ENCODE measurements at regions of chr1 and their contacts with region 1.

Region 1: GRCh38 chr1:207251066-207251465 is 70.4 kb upstream of the CD55 start:
- DNase-seq: no peak
- ATAC-seq: no peak
- H3K4me3 ChIP-seq: no peak overlapping the region
- H3K4me3 Mint-ChIP-seq: no peak overlapping the region
- H3K27ac ChIP-seq: no peak overlapping the region
- H3K27ac Mint-ChIP-seq: no peak overlapping the region
- H3K4me1 ChIP-seq: no peaks in the 10 kb centered on the region
- H3K4me1 Mint-ChIP-seq: no peaks in the 10 kb centered on the region
- H3K27me3 ChIP-seq: no peaks in the 10 kb centered on the region
- H3K27me3 Mint-ChIP-seq: no peaks in the 10 kb centered on the region
- CTCF ChIP-seq: no peak

Region 2: DNA sequence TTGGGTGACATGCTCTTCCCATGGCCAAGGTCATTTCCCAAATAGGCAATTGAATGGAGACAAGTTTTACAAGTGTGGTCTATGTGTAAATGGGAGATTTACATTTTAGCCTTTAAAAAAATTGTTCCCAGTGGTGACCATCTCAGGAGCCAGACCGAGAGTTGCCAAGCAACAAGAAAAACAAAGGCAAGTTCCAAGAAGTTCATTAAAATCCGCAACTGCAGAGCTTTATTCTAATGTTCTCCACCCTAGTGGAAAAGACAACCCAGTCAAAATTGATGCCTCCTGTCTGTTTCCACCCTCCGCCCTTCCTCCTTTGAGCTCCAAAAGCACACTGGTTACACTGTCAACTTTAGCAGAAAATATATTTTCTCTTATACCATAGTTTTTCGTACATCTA is 37.2 kb after region 1 on chr1:
- CTCF ChIA-PET with region 1: no interaction called
- POLR2A ChIA-PET with region 1: no interaction called
- intact Hi-C with region 1: loop called in 1 of 2 experiments (anchors 5 kb)
- DNase-seq: no peak
- ATAC-seq: no peak
- H3K4me3 ChIP-seq: no peak overlapping the region
- H3K4me3 Mint-ChIP-seq: no peak overlapping the region
- H3K27ac ChIP-seq: no peak overlapping the region
- H3K27ac Mint-ChIP-seq: no peak overlapping the region
- H3K4me1 ChIP-seq: peaks cover 6% of the 10 kb centered on the region
- H3K4me1 Mint-ChIP-seq: peaks cover 28% of the 10 kb centered on the region
- H3K27me3 ChIP-seq: no peaks in the 10 kb centered on the region
- H3K27me3 Mint-ChIP-seq: no peaks in the 10 kb centered on the region
- CTCF ChIP-seq: no peak

Region 3: DNA sequence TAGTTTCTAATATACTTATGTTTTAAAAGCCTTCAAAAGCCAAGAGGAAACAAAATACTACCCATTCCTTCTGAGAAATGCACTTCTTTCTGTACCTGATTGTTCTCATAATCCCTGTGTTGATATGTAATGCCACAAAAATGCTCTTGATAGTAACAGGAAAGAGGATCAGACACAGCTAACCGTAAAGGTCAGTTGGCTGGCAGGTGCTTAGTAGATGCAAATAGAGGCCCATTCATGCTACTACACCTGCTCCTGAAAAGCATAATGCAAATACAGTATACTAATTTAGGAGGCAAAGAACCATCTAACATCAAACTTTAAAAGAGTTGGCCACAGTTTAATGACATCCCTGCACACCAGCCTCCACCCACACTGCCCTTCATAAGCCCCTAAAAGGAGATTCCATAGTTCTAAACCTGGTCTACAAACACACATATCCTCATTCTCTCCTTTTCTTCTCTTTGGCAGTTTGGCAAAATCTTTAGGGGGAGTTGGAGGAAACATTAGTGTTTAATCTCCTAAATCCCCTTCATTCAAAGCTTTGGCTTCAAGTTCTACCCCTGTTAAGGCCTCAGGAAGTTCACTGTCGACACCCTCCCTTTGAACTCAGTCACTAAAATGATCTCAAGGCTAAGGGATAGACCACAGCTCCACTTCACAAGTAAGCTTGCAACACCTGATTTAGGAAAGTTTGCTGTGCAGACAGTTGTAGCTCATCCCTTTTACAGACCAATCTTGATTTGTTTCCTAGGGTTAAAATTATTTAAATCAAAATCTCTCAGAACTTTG is 497.9 kb after region 1 on chr1:
- CTCF ChIA-PET with region 1: no interaction called
- POLR2A ChIA-PET with region 1: no interaction called
- intact Hi-C with region 1: no loop called
- DNase-seq: peak in 3 of 14 experiments; percentile 39 to 56 (median 41)
- ATAC-seq: peak; percentile 18
- H3K4me3 ChIP-seq: no peak overlapping the region
- H3K4me3 Mint-ChIP-seq: peak overlapping the region; percentile 86
- H3K27ac ChIP-seq: no peak overlapping the region
- H3K27ac Mint-ChIP-seq: peak overlapping the region; percentile 78
- H3K4me1 ChIP-seq: peaks cover 25% of the 10 kb centered on the region
- H3K4me1 Mint-ChIP-seq: peaks cover 54% of the 10 kb centered on the region
- H3K27me3 ChIP-seq: no peaks in the 10 kb centered on the region
- H3K27me3 Mint-ChIP-seq: no peaks in the 10 kb centered on the region
- CTCF ChIP-seq: no peak

Measured in CD4-positive, alpha-beta T cell (primary cell).